WTC11 (cell line): ENCODE measurements at regions of chr18 and their contacts with region 1.

Region 1: DNA sequence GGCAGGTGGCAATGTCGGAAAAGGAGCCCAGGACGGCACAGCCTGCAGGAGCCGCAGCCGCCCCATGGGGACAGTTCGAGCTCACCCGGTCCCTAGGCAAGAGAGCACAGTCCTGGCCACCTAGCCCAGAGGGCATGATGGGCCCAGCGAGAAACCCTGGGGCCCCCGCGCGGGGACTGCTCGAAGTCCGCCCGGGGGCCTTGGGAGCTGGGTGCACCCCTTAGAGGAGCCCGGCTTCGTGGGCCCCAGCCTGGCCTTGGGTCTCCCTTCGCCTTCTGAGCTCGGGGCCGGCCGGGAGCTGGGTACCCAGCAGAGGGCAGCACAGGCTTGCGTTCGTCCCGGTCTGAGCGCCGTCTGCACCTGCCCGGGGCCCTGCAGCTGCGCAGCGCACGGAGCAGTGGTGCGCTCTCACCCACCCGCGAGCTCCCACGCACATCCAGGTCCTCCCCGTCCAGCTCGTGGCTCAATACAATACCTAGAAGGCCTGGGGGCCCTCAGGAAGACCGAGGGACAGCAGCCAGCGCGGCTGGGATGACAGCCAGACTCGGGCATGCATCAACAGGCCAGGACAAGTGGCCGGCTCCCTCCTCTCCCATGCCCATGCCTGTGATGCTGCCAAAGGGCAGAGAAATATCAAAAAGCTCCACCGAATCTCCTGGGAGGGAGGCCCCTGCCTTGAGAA is 96.2 kb upstream of the ZNF532 start:
- DNase-seq: peak; percentile 90
- ATAC-seq: peak; percentile 92
- H3K4me3 Mint-ChIP-seq: peak overlapping the region; percentile 70
- H3K27ac Mint-ChIP-seq: no peak overlapping the region
- H3K4me1 Mint-ChIP-seq: peaks cover 12% of the 10 kb centered on the region
- H3K27me3 Mint-ChIP-seq: peaks cover 8% of the 10 kb centered on the region
- CTCF ChIP-seq: peak; percentile 75

Region 2: GRCh38 chr18:58392324-58393000 is 376.0 kb before region 1 on chr18:
- CTCF ChIA-PET with region 1: interaction called, 10 read pairs
- POLR2A ChIA-PET with region 1: no interaction called
- DNase-seq: no peak
- ATAC-seq: peak; percentile 41
- H3K4me3 Mint-ChIP-seq: no peak overlapping the region
- H3K27ac Mint-ChIP-seq: peak overlapping the region; percentile 84
- H3K4me1 Mint-ChIP-seq: peaks cover 14% of the 10 kb centered on the region
- H3K27me3 Mint-ChIP-seq: no peaks in the 10 kb centered on the region
- CTCF ChIP-seq: no peak

Region 3: DNA sequence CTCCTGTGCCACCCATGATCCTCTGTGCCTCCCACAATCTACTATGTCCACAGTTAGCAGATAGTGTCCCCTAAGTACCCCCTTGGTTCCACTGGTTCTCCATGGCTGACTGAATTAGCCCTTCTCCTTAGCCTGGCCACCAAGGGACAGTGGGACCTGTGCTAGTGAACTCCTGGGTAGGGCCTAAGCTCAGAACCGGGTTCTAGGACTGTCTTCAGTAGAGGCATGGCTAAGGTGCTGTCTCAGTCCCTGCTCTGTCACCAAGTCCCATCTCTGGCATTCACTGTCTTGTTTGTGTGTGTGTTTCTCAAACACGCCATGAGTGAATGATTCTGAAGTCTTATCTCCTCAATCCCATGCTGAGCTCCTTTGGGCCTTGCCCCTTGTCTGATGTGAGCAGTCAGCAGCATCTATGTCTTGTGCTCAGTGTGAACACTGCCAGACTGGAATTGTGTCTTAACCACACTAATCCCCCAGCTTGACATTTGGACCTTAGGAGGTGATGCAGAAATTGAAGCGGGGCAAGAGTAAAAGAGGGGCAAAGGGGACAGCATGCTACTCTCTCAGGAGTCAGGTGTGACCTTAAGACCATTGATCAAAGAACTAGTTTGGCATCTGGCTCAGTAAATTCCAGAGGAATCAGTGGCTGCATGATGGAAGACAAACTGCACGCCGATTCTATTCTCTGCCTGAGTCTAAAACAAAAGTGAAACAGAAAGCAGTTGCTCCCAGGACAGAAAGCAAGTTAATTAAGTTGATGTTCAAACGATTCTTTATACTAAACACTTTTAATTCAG is 330.1 kb before region 1 on chr18:
- CTCF ChIA-PET with region 1: no interaction called
- POLR2A ChIA-PET with region 1: no interaction called
- DNase-seq: no peak
- ATAC-seq: no peak
- H3K4me3 Mint-ChIP-seq: no peak overlapping the region
- H3K27ac Mint-ChIP-seq: no peak overlapping the region
- H3K4me1 Mint-ChIP-seq: peaks cover 7% of the 10 kb centered on the region
- H3K27me3 Mint-ChIP-seq: no peaks in the 10 kb centered on the region; the same call in 1 of the 2 replicates
- CTCF ChIP-seq: no peak

Region 4: GRCh38 chr18:58511897-58512581 is 256.4 kb before region 1 on chr18:
- CTCF ChIA-PET with region 1: interaction called, 28 read pairs
- POLR2A ChIA-PET with region 1: no interaction called
- DNase-seq: peak; percentile 73
- ATAC-seq: peak; percentile 82
- H3K4me3 Mint-ChIP-seq: peak overlapping the region; percentile 45
- H3K27ac Mint-ChIP-seq: peak overlapping the region; percentile 88
- H3K4me1 Mint-ChIP-seq: peaks cover 34% of the 10 kb centered on the region
- H3K27me3 Mint-ChIP-seq: no peaks in the 10 kb centered on the region
- CTCF ChIP-seq: no peak

Region 5: DNA sequence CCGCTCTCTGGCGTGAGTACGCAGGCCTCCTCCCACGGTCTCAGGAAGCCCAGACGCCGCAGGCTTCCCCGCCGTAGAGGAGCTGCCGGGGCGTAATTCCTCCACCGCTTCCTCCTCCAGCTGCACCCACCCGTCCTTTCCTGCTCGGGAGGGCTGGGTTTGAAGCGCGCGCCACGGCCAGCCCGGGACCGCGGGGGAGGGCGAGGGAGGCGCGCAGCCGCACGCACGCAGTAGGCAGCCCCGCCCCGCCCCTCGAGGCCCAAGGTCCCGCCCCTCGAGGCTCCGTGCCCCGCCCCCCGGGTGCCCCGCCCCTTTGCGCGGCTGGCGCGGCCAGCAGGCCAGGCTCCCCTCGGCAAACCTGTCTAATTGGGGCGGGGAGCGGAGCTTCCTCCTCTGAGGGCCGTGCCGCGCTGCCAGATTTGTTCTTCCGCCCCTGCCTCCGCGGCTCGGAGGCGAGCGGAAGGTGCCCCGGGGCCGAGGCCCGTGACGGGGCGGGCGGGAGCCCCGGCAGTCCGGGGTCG is 97.3 kb before region 1 on chr18 and contains the start of gene MALT1:
- CTCF ChIA-PET with region 1: interaction called, 45 read pairs
- POLR2A ChIA-PET with region 1: interaction called, 3 read pairs
- DNase-seq: peak; percentile 94
- ATAC-seq: peak; percentile 86
- H3K4me3 Mint-ChIP-seq: peak within 1 kb of the TSS; percentile 87
- H3K27ac Mint-ChIP-seq: peak within 1 kb of the TSS; percentile 85
- H3K4me1 Mint-ChIP-seq: peaks cover 18% of the 10 kb centered on the region
- H3K27me3 Mint-ChIP-seq: no peaks in the 10 kb centered on the region
- CTCF ChIP-seq: no peak
- total RNA-seq, gene MALT1: 11.2 to 13.6 TPM (median 13.2 TPM) in 3 replicates

Region 6: DNA sequence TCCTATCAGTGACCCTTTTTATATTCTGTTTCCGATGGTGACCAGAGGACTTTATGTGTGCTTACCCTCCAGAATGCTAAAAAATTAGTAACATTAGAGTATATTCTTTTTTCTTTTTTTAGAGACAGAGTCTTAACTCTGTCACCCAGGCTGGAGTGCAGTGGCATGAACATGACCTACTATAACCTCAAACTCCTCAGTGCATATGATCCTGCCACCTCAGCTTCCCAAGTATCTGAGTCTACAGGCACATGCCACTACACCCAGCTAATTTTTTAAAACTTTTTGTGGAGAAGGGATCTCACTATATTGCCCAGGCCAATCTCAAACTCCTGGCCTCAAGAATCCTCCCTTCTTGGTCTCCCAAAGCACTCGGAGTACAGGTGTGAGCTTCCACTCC is 22.5 kb before region 1 on chr18:
- CTCF ChIA-PET with region 1: interaction called, 29 read pairs
- POLR2A ChIA-PET with region 1: no interaction called
- DNase-seq: no peak
- ATAC-seq: no peak
- H3K4me3 Mint-ChIP-seq: no peak overlapping the region
- H3K27ac Mint-ChIP-seq: no peak overlapping the region
- H3K4me1 Mint-ChIP-seq: no peaks in the 10 kb centered on the region
- H3K27me3 Mint-ChIP-seq: no peaks in the 10 kb centered on the region
- CTCF ChIP-seq: no peak

Region 7: GRCh38 chr18:58863539-58864145 is 95.2 kb after region 1 on chr18:
- CTCF ChIA-PET with region 1: interaction called, 12 read pairs
- POLR2A ChIA-PET with region 1: interaction called, 4 read pairs
- DNase-seq: peak; percentile 46
- ATAC-seq: peak; percentile 4
- H3K4me3 Mint-ChIP-seq: peak overlapping the region; percentile 62
- H3K27ac Mint-ChIP-seq: no peak overlapping the region
- H3K4me1 Mint-ChIP-seq: peaks cover 86% of the 10 kb centered on the region
- H3K27me3 Mint-ChIP-seq: no peaks in the 10 kb centered on the region
- CTCF ChIP-seq: no peak

Region 8: DNA sequence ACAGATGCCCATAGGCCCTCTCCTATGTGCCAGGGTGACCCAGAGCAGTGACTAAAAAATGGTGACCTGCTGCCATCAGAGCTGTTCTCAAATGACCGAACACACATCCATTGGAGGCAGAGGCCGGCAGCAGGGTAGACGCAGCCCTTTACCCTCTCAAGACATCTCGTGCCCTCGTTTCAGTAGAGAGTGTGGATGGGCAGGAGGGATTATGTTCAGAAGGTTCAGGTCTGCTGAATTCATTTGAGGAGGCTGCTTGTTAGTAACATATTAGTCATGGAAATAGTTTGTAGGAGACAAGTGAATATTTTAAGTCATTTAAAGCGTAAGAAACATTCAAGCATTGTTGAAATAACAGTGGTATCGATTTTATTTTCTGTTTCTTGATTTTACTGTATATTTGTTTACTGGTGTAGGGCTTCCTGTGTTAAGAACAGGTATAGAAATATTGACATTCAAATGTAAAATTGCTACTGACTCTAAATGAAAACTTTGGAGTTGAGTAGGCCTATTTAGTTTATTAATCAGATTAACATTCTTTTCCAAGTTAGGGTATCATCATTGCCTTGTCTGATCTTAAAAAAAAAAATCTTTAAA is 178.8 kb after region 1 on chr18:
- CTCF ChIA-PET with region 1: no interaction called
- POLR2A ChIA-PET with region 1: no interaction called
- DNase-seq: no peak
- ATAC-seq: no peak
- H3K4me3 Mint-ChIP-seq: no peak overlapping the region
- H3K27ac Mint-ChIP-seq: peak overlapping the region; percentile 88
- H3K4me1 Mint-ChIP-seq: peaks cover 28% of the 10 kb centered on the region
- H3K27me3 Mint-ChIP-seq: no peaks in the 10 kb centered on the region
- CTCF ChIP-seq: no peak

Region 9: GRCh38 chr18:59070181-59070912 is 301.9 kb after region 1 on chr18:
- CTCF ChIA-PET with region 1: interaction called, 221 read pairs
- POLR2A ChIA-PET with region 1: no interaction called
- DNase-seq: peak; percentile 96
- ATAC-seq: peak; percentile 98
- H3K4me3 Mint-ChIP-seq: no peak overlapping the region
- H3K27ac Mint-ChIP-seq: no peak overlapping the region
- H3K4me1 Mint-ChIP-seq: no peaks in the 10 kb centered on the region
- H3K27me3 Mint-ChIP-seq: no peaks in the 10 kb centered on the region
- CTCF ChIP-seq: peak; percentile 82